Sciatic nerve (tissue), 2 donors: ENCODE measurements at regions of chr17 and their contacts with region 1.

Region 1: DNA sequence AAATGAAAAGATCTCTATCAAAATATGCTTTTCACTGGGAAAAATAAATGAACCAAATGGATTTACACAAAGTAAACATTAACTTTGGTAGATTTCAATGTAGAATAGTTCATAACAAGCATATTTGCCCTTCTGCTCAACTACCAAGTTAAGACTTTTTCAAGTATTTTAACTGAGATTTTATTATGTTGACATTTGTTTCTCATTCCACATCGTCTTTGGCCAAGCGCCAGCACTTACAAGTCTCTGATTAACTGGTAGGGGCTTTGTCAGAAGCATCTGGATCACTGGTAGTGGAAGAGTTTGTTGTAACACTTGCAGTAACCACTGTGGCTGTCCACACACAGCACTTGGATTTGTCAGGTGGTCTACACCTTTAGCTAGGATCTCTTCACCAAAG is 22.9 kb downstream of the SLFN12L start:
- DNase-seq: no peak
- ATAC-seq: no peak

Region 2: GRCh38 chr17:35460354-35460851 is 54.2 kb before region 1 on chr17:
- intact Hi-C with region 1: loop called (anchors 2 kb)
- DNase-seq: peak; percentile 59
- ATAC-seq: peak; percentile 52